ENCODE measurements at regions of chr12 and their contacts with region 1.

Region 1: GRCh38 chr12:66959272-66959671 is 280.4 kb upstream of the GRIP1 start:
- DNase-seq: no peak
- ATAC-seq: no peak
- H3K4me3 ChIP-seq: no peak overlapping the region
- H3K27ac ChIP-seq: no peak overlapping the region
- H3K4me1 ChIP-seq: no peaks in the 10 kb centered on the region
- H3K27me3 ChIP-seq: no peaks in the 10 kb centered on the region
- CTCF ChIP-seq: no peak

Region 2: GRCh38 chr12:66024949-66025348 is 934.3 kb before region 1 on chr12:
- intact Hi-C with region 1: loop called in 1 of 10 experiments (anchors 5 kb)
- DNase-seq: no peak
- ATAC-seq: no peak
- H3K4me3 ChIP-seq: no peak overlapping the region
- H3K27ac ChIP-seq: no peak overlapping the region
- H3K4me1 ChIP-seq: no peaks in the 10 kb centered on the region
- H3K27me3 ChIP-seq: no peaks in the 10 kb centered on the region
- CTCF ChIP-seq: no peak

Region 3: GRCh38 chr12:67220065-67220464 is 260.8 kb after region 1 on chr12:
- intact Hi-C with region 1: no loop called
- DNase-seq: no peak
- ATAC-seq: peak in 1 of 8 donors; percentile 48
- H3K4me3 ChIP-seq: no peak overlapping the region
- H3K27ac ChIP-seq: no peak overlapping the region
- H3K4me1 ChIP-seq: no peaks in the 10 kb centered on the region
- H3K27me3 ChIP-seq: peaks cover 0 to 6% (median 0%) of the 10 kb centered on the region in 7 donors
- CTCF ChIP-seq: peak in 8 of 9 donors; percentile 14 to 54 (median 34)

Measured in heart right ventricle (tissue), 16 donors.